Psoas muscle (tissue), 8 donors: ENCODE measurements at regions of chr2 and their contacts with region 1.

Region 1: GRCh38 chr2:205680067-205680466 is 2.2 kb upstream of the NRP2 start:
- DNase-seq: no peak
- ATAC-seq: peak in 2 of 4 donors; percentile 40
- H3K4me3 ChIP-seq: no peak overlapping the region
- H3K27ac ChIP-seq: no peak overlapping the region
- H3K4me1 ChIP-seq: no peaks in the 10 kb centered on the region
- H3K27me3 ChIP-seq: peaks cover 7 to 46% (median 8%) of the 10 kb centered on the region in 3 donors
- CTCF ChIP-seq: peak; percentile 51

Region 2: DNA sequence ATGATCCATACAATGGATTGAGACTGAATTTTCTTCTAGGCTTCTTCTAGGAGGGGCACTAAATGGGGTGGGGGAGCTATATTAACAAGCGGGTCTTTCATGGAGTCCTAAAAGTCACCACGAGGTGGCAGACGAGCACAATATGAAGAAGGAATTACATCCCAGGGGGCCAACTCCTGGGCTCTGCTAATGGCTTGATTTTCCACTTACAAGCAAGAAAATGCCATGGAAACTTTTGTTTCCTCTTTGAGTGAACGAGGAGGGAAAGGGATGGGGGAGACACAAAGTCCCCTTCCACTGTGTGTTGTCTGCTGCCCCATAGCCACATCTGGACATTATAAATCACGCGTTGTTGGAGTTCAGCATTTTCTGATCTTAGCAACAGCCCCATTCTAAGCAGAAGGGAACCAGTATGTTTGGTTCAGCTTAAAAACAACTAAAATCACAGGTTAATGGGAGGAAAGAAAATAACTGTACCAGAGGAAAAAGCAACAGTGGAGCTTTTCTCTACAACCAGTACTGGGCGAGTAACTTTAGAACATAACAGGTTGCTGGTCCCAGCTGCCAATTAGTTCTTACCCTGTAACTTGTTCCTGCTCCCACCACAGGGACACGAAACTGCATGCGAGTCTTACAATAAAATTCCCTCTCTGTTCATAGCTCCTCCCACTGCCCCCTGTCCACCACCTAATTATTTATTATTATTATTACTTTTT is 1419.7 kb before region 1 on chr2:
- intact Hi-C with region 1: loop called (anchors 5 kb)
- DNase-seq: peak; percentile 35 to 57
- ATAC-seq: peak; percentile 54 to 86 (median 64)
- H3K4me3 ChIP-seq: no peak overlapping the region
- H3K27ac ChIP-seq: no peak overlapping the region
- H3K4me1 ChIP-seq: no peaks in the 10 kb centered on the region
- H3K27me3 ChIP-seq: peaks cover 0 to 2% (median 0%) of the 10 kb centered on the region in 3 donors
- CTCF ChIP-seq: peak; percentile 79

Region 3: GRCh38 chr2:204871231-204871953 is 808.7 kb before region 1 on chr2:
- intact Hi-C with region 1: loop called in 1 of 2 experiments (anchors 10 kb)
- DNase-seq: no peak
- ATAC-seq: no peak
- H3K4me3 ChIP-seq: no peak overlapping the region
- H3K27ac ChIP-seq: no peak overlapping the region
- H3K4me1 ChIP-seq: peaks cover 24% of the 10 kb centered on the region
- H3K27me3 ChIP-seq: no peaks in the 10 kb centered on the region
- CTCF ChIP-seq: peak; percentile 24